Adrenal gland (tissue), 19 donors: ENCODE measurements at regions of chr14 and their contacts with region 1.

Region 1: DNA sequence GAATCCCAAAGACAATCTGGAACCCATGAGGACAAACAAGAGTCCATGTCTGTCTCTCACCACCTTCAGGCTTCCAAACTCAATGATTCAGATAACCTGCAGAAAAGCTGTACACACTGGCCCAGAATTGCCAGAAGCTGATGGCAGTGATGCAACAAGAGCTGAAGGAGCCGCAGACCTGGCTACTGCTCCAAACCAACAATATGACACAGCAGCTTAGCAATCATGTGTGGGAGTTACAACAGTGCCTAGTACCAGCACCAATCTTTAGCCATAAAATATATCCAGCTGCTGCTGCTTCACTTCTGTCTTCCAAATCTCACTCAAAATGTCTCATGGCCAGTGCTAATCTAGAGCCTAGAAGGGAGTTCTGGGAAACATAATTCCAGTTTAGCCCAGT is 22.0 kb downstream of the RPS6KA5 start:
- DNase-seq: no peak
- H3K4me3 ChIP-seq: no peak overlapping the region
- H3K27ac ChIP-seq: no peak overlapping the region
- H3K4me1 ChIP-seq: no peaks in the 10 kb centered on the region
- H3K27me3 ChIP-seq: no peaks in the 10 kb centered on the region
- CTCF ChIP-seq: no peak
- POLR2A ChIP-seq: no peak

Region 2: DNA sequence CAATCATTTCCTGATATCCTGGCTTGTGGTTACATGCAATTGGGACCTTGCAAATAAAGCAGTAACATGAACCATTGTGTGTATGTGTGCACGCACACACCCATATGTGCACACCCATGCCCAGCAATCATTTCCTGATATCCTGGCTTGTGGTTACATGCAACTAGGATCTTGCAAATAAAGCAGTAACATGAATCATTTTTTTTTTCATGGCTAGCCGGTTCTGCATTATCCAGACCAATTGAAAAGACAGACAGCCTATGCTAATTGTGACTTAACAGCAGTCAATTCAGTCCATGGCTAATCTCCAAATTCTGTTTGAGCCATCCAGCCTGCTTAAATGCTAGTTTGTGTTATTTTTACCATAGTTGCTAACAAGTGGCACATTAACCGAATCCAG is 356.5 kb before region 1 on chr14:
- intact Hi-C with region 1: no loop called
- DNase-seq: no peak
- H3K4me3 ChIP-seq: no peak overlapping the region
- H3K27ac ChIP-seq: no peak overlapping the region
- H3K4me1 ChIP-seq: peaks cover 0 to 12% of the 10 kb centered on the region in 2 donors
- H3K27me3 ChIP-seq: no peaks in the 10 kb centered on the region
- CTCF ChIP-seq: no peak
- POLR2A ChIP-seq: no peak

Region 3: DNA sequence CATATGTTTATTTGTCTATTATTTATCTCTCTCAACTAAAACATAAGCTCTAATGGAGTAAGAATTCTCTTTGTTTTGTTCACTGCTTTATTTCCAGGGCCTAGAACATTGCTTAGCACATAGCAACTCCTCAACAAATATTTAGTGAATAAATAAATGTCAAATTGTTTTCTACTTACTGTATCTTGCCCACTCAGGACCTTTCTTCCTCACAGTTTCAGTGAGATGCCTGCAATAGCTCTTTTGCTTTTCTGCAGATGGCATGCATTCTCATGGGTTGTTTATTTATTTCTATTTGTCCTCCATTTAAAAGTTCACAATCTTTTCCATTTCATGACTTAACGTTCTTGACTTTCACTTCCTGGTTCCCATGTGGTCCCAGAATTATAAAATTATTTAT is 127.3 kb before region 1 on chr14:
- intact Hi-C with region 1: loop called in 1 of 2 experiments (anchors 10 kb)
- DNase-seq: no peak
- H3K4me3 ChIP-seq: no peak overlapping the region
- H3K27ac ChIP-seq: no peak overlapping the region
- H3K4me1 ChIP-seq: no peaks in the 10 kb centered on the region
- H3K27me3 ChIP-seq: no peaks in the 10 kb centered on the region
- CTCF ChIP-seq: no peak
- POLR2A ChIP-seq: no peak

Region 4: DNA sequence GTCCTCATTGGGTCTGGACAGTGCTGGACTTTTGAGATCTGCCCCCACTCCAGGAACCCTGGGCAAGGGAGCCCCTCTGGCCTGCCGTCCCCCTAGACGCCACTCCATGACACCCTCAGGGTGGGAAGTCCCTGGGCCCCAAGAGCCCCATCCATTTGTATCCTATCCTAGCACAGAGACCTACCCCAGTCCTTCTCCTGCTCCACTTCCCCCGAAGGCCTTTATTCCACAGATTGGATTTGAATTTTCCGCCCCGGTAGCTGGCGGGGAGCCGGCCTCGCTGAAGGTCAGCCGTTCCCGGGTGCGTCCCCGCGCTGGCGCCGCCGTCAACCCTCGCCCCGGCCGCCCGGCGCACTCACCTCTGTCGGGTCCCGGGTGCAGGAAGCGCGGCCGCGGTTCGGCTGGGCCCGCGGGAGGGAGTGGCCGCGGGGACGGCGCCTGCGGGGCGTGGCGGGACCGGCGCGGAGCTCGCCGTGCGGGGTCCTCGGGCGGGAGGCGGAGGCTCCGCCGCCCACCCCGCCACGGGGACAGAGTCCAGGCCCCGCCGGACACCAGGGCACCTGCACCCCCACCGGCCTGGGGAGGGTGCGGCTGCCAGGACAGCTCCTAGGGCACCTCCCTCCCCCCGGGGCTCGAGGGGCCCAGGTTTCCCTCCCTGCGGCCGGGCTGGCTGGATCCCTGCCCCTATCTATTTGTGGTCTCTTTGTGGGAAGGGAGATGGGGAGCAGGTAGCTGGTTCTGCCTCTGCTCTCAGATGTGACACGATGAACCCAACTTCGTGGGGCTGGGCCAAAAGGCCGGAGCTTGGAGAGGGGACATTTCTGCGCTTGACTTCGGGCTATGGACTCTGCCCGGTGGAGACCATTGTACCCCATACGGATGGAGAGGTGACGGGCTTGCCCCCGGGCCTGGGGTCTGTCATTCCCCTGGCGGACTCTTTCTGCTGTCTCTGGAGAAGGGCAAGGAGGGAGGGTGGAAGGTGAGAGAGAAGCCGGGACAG is 226.0 kb after region 1 on chr14:
- intact Hi-C with region 1: no loop called
- DNase-seq: peak in 4 of 7 donors; percentile 33 to 44 (median 42)
- H3K4me3 ChIP-seq: peak overlapping the region in 1 of 4 donors; percentile 64
- H3K27ac ChIP-seq: no peak overlapping the region
- H3K4me1 ChIP-seq: peaks cover 4 to 8% of the 10 kb centered on the region in 2 donors
- H3K27me3 ChIP-seq: no peaks in the 10 kb centered on the region
- CTCF ChIP-seq: no peak
- POLR2A ChIP-seq: no peak